ENCODE measurements at regions of chr2 and their contacts with region 1.

Region 1: DNA sequence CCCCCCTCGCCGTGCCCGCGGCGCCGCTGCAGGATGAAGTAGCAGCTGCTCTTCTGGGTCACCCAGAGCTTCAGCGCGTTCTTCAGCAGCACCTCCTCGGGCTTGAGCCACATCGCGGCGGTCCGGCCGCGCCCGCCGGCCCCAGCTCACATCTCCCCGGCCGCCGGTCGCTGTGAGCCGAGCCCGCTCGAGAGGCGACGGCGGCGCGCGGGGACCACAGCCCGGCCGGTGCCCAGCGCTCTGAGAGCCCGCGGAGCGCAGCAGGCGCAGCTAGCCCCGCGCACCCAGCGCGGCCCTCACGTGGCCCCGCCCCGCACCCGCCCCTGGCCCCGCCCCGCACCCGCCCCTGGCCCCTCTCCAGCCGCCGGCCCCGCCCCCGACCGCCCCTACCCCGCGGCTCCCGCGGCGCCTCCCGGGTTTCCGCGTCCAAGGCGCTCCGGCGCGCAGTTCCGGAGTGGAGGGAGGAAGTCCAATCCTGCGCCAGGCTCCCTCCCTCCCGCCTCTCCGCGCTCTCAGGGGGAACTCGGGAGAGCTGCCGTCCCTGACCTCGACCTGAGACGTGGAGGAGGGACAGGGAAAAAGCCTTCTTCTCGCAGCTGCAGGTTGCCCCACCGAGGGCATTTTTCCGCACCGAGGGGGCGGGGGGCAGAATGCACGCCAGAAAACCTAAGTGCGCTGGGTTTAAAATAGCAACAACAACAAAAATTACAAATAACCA is at the start of gene TBC1D8:
- DNase-seq: peak; percentile 52 to 94
- H3K4me3 ChIP-seq: peak within 1 kb of the TSS; percentile 73 to 83
- H3K27ac ChIP-seq: peak within 1 kb of the TSS; percentile 79 to 83
- H3K4me1 ChIP-seq: peaks cover 0 to 15% of the 10 kb centered on the region in 2 donors
- H3K27me3 ChIP-seq: no peaks in the 10 kb centered on the region
- CTCF ChIP-seq: no peak
- total RNA-seq, gene TBC1D8: 17.8 TPM

Region 2: GRCh38 chr2:100606726-100607343 is 544.5 kb before region 1 on chr2:
- intact Hi-C with region 1: loop called (anchors 5 kb)
- DNase-seq: peak in 1 of 2 donors; percentile 66
- H3K4me3 ChIP-seq: no peak overlapping the region
- H3K27ac ChIP-seq: no peak overlapping the region
- H3K4me1 ChIP-seq: peaks cover 5 to 10% of the 10 kb centered on the region in 2 donors
- H3K27me3 ChIP-seq: no peaks in the 10 kb centered on the region
- CTCF ChIP-seq: peak; percentile 58 to 79 (median 73)

Region 3: GRCh38 chr2:100968146-100969145 is 182.9 kb before region 1 on chr2:
- intact Hi-C with region 1: no loop called
- DNase-seq: no peak
- H3K4me3 ChIP-seq: no peak overlapping the region
- H3K27ac ChIP-seq: no peak overlapping the region
- H3K4me1 ChIP-seq: peaks cover 6 to 17% of the 10 kb centered on the region in 2 donors
- H3K27me3 ChIP-seq: no peaks in the 10 kb centered on the region
- CTCF ChIP-seq: no peak

Region 4: GRCh38 chr2:101001691-101002561 is 149.4 kb before region 1 on chr2 and contains the start of gene RPL31:
- intact Hi-C with region 1: loop called (anchors 2 kb)
- DNase-seq: peak; percentile 89 to 98
- H3K4me3 ChIP-seq: peak within 1 kb of the TSS; percentile 90
- H3K27ac ChIP-seq: peak within 1 kb of the TSS; percentile 89 to 91
- H3K4me1 ChIP-seq: peaks cover 3 to 15% of the 10 kb centered on the region in 2 donors
- H3K27me3 ChIP-seq: no peaks in the 10 kb centered on the region
- CTCF ChIP-seq: no peak
- total RNA-seq, gene RPL31: 479 TPM

Region 5: GRCh38 chr2:101036562-101037457 is 114.5 kb before region 1 on chr2:
- intact Hi-C with region 1: loop called (anchors 1 kb)
- DNase-seq: no peak
- H3K4me3 ChIP-seq: no peak overlapping the region
- H3K27ac ChIP-seq: no peak overlapping the region
- H3K4me1 ChIP-seq: no peaks in the 10 kb centered on the region
- H3K27me3 ChIP-seq: no peaks in the 10 kb centered on the region
- CTCF ChIP-seq: peak in 2 of 3 experiments; percentile 25 to 55

Region 6: DNA sequence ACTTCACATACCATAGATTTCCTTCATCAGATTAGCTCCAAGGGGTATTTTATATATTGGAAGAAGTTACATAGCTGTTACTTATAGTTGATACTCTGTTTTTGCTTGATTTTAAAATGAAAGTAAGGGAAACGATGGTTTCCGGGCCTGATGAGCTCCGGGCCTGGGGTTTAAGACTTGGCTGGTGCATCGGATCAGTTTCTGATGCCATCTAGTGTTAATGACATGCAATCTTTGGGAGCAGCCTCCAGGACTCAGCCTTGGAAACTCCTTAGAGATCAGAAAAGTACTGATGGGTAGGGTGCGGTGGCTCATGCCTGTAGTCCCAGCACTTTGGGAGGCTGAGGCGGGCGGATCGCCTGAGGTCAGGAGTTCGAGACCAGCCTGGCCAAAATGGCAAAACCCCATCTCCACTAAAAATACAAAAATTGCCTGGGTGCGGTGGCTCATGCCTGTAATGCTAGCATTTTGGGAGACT is 54.3 kb after region 1 on chr2:
- intact Hi-C with region 1: loop called (anchors 2 kb)
- DNase-seq: peak in 1 of 2 donors; percentile 69
- H3K4me3 ChIP-seq: peak overlapping the region; percentile 16 to 40
- H3K27ac ChIP-seq: no peak overlapping the region
- H3K4me1 ChIP-seq: no peaks in the 10 kb centered on the region
- H3K27me3 ChIP-seq: no peaks in the 10 kb centered on the region
- CTCF ChIP-seq: peak; percentile 29 to 68 (median 53)

Region 7: DNA sequence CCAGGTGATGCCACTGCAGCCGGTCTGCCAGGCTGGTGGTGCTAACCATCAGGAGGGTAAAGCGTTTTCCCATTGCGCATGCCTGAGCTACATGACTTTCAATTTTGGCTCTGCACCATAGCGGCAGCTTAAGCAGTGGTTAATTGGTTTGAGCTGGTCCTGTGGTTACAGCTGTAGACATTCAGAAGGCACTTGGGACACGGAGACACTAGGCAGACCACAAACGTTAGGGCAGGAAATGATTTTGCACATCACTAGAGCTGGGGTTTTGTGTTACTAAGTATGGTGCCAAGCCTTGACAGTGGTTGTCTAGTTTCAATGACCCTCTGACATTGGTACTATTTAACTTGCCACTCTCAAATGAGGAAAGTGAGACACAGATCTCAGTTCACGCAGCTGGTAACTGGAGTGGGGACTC is 72.5 kb after region 1 on chr2:
- intact Hi-C with region 1: no loop called
- DNase-seq: no peak
- H3K4me3 ChIP-seq: no peak overlapping the region
- H3K27ac ChIP-seq: no peak overlapping the region
- H3K4me1 ChIP-seq: no peaks in the 10 kb centered on the region
- H3K27me3 ChIP-seq: no peaks in the 10 kb centered on the region
- CTCF ChIP-seq: no peak

Region 8: GRCh38 chr2:101308432-101309210 is 157.3 kb after region 1 on chr2 and contains the start of gene RNF149:
- intact Hi-C with region 1: loop called (anchors 10 kb)
- DNase-seq: peak; percentile 77 to 96
- H3K4me3 ChIP-seq: peak within 1 kb of the TSS; percentile 76 to 95
- H3K27ac ChIP-seq: peak within 1 kb of the TSS; percentile 92 to 94
- H3K4me1 ChIP-seq: peaks cover 3 to 16% of the 10 kb centered on the region in 2 donors
- H3K27me3 ChIP-seq: no peaks in the 10 kb centered on the region
- CTCF ChIP-seq: no peak
- total RNA-seq, gene RNF149: 39.9 TPM

Measured in ascending aorta (tissue), 2 donors.